Esophagus muscularis mucosa (tissue), 4 donors: ENCODE measurements at regions of chr1 and their contacts with region 1.

Region 1: DNA sequence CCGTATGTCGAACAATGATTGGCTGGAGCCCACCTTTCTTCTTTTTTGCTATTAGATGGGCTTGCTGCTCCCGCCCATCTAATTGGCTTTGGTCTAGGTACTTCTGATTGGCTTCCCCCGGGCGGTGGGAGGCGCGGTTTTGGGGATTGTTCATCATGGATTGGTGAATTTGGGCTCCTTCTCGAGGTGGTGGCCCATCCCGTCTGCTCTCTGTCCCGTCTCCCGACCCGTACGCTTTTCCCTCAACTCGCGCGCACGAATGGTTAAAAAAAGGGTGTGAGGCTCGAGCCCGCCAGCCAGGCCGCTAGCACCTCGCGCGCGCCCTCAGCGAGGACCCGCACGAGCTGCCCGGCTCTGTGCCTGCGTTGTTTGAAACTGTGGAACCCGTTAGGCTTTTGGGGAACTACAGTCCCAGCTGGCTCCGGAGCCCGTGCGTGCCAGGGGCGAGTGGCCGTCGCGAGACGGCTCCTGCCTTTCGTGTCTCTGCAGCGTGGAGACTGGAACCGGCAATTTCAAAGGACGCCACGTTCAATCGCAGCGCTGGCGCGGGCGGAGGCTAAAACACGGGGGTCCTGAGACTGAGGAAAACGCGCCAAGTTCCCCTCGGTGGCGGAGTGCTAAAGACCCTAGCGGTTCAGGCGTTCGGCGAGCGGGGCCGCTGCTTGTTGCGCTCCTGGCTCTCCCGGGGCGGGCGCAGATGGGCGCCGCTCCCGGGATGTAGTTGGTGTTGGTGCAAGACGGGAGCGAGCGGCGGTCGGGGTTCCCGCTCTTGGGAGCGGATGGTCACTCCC is at the start of gene USP1:
- DNase-seq: peak; percentile 99
- H3K4me3 ChIP-seq: peak within 1 kb of the TSS; percentile 79 to 97 (median 88)
- H3K27ac ChIP-seq: peak within 1 kb of the TSS; percentile 92 to 99 (median 98)
- H3K4me1 ChIP-seq: peaks cover 18 to 47% (median 42%) of the 10 kb centered on the region in 4 donors
- H3K27me3 ChIP-seq: no peaks in the 10 kb centered on the region
- CTCF ChIP-seq: no peak
- EP300 ChIP-seq: no peak
- POLR2A ChIP-seq: no peak
- total RNA-seq, gene USP1: 21.0 to 32.4 (median 27.6) TPM

Region 2: GRCh38 chr1:61724813-61725694 is 711.6 kb before region 1 on chr1 and contains the start of gene TM2D1:
- intact Hi-C with region 1: loop called (anchors 10 kb)
- DNase-seq: peak; percentile 96
- H3K4me3 ChIP-seq: peak within 1 kb of the TSS; percentile 74 to 96 (median 90)
- H3K27ac ChIP-seq: peak within 1 kb of the TSS; percentile 86 to 91 (median 90)
- H3K4me1 ChIP-seq: peaks cover 15 to 38% (median 30%) of the 10 kb centered on the region in 4 donors
- H3K27me3 ChIP-seq: no peaks in the 10 kb centered on the region
- CTCF ChIP-seq: no peak
- EP300 ChIP-seq: no peak
- POLR2A ChIP-seq: peak; percentile 53
- total RNA-seq, gene TM2D1: 59.6 to 73.5 (median 66.3) TPM

Region 3: GRCh38 chr1:62356257-62356835 is 80.3 kb before region 1 on chr1:
- intact Hi-C with region 1: no loop called
- DNase-seq: no peak
- H3K4me3 ChIP-seq: no peak overlapping the region
- H3K27ac ChIP-seq: no peak overlapping the region
- H3K4me1 ChIP-seq: no peaks in the 10 kb centered on the region
- H3K27me3 ChIP-seq: no peaks in the 10 kb centered on the region
- CTCF ChIP-seq: no peak
- EP300 ChIP-seq: no peak
- POLR2A ChIP-seq: no peak

Region 4: GRCh38 chr1:62687903-62688686 is 251.4 kb after region 1 on chr1 and contains the start of gene DOCK7:
- intact Hi-C with region 1: loop called (anchors 10 kb)
- DNase-seq: peak; percentile 92
- H3K4me3 ChIP-seq: peak within 1 kb of the TSS; percentile 92 to 98 (median 96)
- H3K27ac ChIP-seq: peak within 1 kb of the TSS; percentile 80 to 92 (median 90)
- H3K4me1 ChIP-seq: peaks cover 28 to 74% (median 67%) of the 10 kb centered on the region in 4 donors
- H3K27me3 ChIP-seq: no peaks in the 10 kb centered on the region
- CTCF ChIP-seq: no peak
- EP300 ChIP-seq: no peak
- POLR2A ChIP-seq: no peak
- total RNA-seq, gene DOCK7: 27.7 to 66.7 (median 30.5) TPM

Region 5: DNA sequence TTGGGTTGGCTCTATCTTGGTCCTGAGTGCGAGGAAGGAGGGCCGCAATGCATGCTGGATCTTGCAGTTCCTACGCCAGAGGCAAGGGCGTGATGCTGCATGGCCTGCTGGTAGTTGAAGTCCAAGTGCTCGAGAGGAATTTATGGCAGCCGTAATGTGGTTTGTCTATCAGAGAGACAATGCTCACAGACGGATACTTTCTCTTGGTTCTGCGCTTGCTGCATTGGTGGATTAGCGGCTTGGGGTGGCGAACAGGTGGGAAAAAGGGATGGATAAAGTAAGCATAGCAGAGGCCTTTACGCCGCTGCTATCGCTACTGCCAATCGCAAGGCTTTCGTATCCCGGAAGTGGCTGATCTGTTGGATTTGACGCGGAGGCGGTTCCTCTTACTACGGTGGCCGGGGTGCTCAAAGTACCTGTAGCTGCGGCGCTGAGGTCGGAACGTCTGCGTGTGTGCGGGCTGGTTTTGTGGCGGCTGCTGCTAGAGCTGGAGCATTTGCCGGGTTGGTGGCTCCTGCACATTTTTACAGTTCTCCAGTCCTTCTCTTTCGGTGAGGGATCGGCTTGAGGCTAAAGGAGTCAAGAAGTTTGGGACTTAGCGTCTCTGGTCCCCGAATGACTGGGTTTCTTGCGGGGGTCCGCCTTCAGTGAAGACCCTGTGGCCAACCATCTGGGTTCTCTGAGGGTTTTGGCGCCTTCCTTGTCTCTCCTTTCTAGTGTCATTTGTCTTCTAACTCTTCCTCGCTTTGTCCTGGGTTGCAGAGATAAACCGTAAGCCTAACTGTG is 347.3 kb after region 1 on chr1 and contains the start of gene ATG4C:
- intact Hi-C with region 1: loop called (anchors 5 kb)
- DNase-seq: peak; percentile 99
- H3K4me3 ChIP-seq: peak within 1 kb of the TSS; percentile 66 to 87 (median 81)
- H3K27ac ChIP-seq: peak within 1 kb of the TSS; percentile 89 to 93 (median 92)
- H3K4me1 ChIP-seq: peaks cover 10 to 22% (median 19%) of the 10 kb centered on the region in 4 donors
- H3K27me3 ChIP-seq: no peaks in the 10 kb centered on the region
- CTCF ChIP-seq: no peak
- EP300 ChIP-seq: no peak
- POLR2A ChIP-seq: no peak
- total RNA-seq, gene ATG4C: 5.0 to 12.5 (median 8.3) TPM